Activated CD4-positive, alpha-beta memory T cell treated with anti-CD3 and anti-CD28 coated beads for 36 hours (primary cell): ENCODE measurements at regions of chr1 and their contacts with region 1.

Region 1: DNA sequence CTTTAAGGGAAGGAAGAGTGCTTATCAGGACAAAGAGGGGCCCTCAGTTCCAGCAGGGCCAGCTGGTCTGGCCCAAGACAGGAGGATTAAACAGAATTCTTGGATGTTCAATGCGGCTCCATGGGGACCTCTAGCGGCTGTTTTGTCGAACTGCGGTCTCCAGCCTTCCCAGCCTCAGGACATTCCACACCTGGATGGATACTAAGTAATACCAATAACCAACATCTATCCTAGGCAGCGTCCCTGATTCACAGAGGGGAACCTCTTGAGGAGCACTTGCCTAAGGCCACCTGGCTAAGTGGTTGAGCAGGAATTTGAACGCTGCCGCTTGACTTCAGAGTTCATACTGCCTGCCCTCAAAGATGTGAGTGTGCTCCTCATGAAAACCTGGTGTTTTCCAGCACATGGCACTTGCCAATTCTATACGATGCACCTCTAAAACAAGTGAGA is 15.5 kb upstream of the CD247 start:
- DNase-seq: peak; percentile 76
- H3K4me3 Mint-ChIP-seq: no peak overlapping the region
- H3K27ac Mint-ChIP-seq: no peak overlapping the region
- H3K4me1 Mint-ChIP-seq: peaks cover 4% of the 10 kb centered on the region
- H3K27me3 Mint-ChIP-seq: no peaks in the 10 kb centered on the region

Region 2: DNA sequence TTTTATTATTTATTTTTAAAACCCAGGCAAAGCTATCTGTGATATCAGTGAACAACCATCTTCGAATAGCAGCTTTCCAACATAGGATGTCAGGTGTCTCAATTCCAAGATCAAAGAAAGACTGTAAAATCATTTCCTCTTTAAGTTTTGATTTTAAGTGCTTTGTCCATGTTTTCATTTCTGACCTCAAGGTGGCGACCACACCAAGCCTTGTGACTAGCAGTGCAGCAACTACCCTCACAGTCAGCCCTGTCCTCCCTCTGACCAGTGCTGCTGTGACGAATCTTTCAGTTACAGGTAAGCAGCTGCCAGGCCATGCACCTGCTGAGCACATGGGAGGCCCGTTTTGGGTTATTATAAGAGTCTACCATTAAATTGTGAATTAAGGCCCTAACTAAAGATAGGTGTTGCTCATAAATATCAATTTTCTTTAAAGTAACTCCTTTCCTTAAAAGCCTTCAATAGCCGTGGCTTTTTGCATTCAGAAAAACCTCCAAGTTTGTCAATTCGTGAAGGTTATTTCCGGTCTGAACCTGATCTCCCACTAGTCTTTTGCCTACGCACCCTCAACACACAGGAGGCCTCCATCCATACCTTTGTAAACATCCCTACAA is 132.5 kb before region 1 on chr1:
- CTCF ChIA-PET with region 1: interaction called, 59 read pairs
- POLR2A ChIA-PET with region 1: interaction called, 4 read pairs
- intact Hi-C with region 1: loop called (anchors 1 kb)
- DNase-seq: peak; percentile 64
- H3K4me3 Mint-ChIP-seq: no peak overlapping the region
- H3K27ac Mint-ChIP-seq: no peak overlapping the region
- H3K4me1 Mint-ChIP-seq: no peaks in the 10 kb centered on the region
- H3K27me3 Mint-ChIP-seq: no peaks in the 10 kb centered on the region

Region 3: DNA sequence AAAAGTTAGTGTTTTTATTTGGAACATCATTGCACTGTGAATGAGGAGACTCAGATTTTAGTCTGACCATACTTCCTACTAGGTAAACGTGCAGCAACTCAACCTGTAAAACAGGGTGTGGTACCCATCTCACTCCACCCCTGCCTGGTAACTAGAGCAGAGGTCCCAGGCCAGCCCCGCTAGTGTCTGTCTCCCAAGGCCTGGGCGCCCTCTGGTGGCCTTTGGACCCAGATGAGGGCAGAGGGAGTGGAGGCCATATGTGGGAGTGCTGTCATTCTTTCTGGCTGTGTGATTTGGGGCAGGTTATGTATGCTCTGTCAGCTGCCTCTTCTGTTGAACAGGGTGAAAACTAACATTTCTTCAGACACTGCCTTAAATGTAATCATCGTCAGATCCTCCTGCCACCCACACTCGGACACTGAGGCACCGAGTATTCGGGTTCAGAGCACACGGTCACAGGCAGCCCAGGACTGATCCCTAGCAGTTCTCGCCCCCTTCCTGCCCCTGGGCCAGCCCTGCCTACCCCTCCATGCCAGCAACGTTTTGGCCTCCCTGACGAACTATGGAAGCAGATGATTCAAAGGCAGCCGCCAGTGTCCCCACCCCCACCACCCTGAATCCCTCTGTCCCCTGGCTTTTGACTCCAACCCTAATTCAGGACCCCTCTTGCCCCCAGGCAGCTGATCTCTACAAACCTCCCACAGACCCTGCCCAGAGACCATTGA is 91.6 kb before region 1 on chr1:
- CTCF ChIA-PET with region 1: interaction called, 62 read pairs
- POLR2A ChIA-PET with region 1: no interaction called
- intact Hi-C with region 1: loop called (anchors 1 kb)
- DNase-seq: peak; percentile 91
- H3K4me3 Mint-ChIP-seq: no peak overlapping the region
- H3K27ac Mint-ChIP-seq: peak overlapping the region; percentile 64
- H3K4me1 Mint-ChIP-seq: peaks cover 71% of the 10 kb centered on the region
- H3K27me3 Mint-ChIP-seq: no peaks in the 10 kb centered on the region

Region 4: GRCh38 chr1:167467126-167467710 is 66.7 kb before region 1 on chr1:
- CTCF ChIA-PET with region 1: interaction called, 19 read pairs
- POLR2A ChIA-PET with region 1: no interaction called
- intact Hi-C with region 1: no loop called
- DNase-seq: no peak
- H3K4me3 Mint-ChIP-seq: no peak overlapping the region
- H3K27ac Mint-ChIP-seq: peak overlapping the region; percentile 60
- H3K4me1 Mint-ChIP-seq: peaks cover 65% of the 10 kb centered on the region
- H3K27me3 Mint-ChIP-seq: no peaks in the 10 kb centered on the region

Region 5: DNA sequence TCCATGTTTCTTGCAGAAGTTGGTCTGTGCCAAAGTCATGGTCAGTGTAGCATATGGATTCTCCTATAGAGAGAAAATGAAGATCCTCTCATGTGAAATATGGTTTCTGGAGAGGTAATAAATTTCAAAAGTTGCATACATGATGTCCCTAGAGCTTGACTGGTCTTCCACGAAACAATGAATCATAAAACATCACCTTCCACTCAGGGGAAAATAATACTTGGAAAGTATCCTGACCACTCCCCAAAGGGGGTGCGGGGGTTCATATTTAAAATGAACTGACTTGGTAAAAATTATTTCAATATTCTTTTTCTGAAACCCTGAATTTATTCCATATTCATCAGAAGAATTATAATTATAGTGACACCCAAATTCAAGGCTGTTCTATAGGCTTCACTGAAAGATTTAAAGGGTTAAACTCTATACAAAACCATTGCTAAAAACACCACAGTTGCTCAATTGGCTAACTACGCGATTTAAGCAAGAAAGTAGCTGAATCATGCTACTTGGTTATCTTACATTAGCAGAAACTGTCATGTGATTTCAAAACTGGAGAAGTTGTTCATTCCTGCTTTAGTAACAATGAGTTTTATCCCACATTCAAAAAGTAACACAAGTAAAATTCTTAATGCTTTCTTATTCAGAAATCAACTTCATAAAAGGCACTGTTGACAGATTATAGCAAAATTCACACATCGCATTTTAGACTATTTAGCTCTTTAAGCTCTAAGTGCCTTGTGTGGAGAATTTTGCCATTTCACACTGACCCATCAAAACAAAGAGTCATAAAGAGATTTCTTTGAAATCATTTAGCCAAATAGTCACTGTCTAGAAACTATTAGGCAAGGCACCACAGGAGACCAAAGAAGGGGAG is 14.4 kb after region 1 on chr1:
- CTCF ChIA-PET with region 1: interaction called, 47 read pairs
- POLR2A ChIA-PET with region 1: no interaction called
- intact Hi-C with region 1: no loop called
- DNase-seq: no peak
- H3K4me3 Mint-ChIP-seq: no peak overlapping the region
- H3K27ac Mint-ChIP-seq: no peak overlapping the region
- H3K4me1 Mint-ChIP-seq: peaks cover 36% of the 10 kb centered on the region
- H3K27me3 Mint-ChIP-seq: no peaks in the 10 kb centered on the region

Region 6: GRCh38 chr1:167578939-167579521 is 45.2 kb after region 1 on chr1:
- CTCF ChIA-PET with region 1: no interaction called
- POLR2A ChIA-PET with region 1: no interaction called
- intact Hi-C with region 1: no loop called
- DNase-seq: no peak
- H3K4me3 Mint-ChIP-seq: no peak overlapping the region
- H3K27ac Mint-ChIP-seq: no peak overlapping the region
- H3K4me1 Mint-ChIP-seq: no peaks in the 10 kb centered on the region
- H3K27me3 Mint-ChIP-seq: peaks cover 2% of the 10 kb centered on the region

Region 7: DNA sequence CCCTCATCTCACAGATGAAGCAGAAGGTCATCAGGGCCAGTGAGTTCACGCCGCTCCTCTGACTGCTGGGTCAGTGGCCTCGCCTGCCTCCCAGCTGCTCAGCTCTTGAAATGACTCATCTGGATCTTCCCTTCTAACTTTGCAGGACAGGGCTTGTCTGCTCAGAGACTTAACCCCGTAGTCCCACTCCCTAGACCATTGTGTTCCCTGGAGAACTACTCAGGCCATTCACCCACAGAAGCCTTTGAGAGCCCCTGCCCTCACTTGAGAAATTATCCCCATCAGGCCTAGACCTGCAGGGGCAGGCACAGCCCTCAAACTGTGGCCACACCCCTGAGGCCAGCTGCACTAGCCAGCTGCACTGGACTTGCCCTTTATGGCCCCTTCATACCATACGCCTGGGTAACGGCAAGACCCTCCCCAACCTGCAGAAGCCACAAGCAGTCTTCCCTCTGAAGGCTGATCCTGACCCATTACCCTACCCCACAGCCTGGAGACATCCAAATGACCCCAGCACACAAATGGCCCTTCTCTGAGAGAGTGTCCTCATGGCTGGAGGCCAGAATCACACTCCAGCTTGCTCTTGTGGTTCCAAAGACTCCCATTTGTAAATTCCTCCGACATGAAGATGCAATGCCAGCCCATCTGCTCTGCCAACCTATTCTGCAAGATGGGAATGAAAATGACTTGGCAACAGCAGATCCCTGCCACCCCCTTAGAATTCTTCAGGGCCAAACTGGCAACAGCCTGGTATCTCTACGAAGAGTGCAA is 129.3 kb after region 1 on chr1:
- CTCF ChIA-PET with region 1: no interaction called
- POLR2A ChIA-PET with region 1: no interaction called
- intact Hi-C with region 1: no loop called
- DNase-seq: no peak
- H3K4me3 Mint-ChIP-seq: no peak overlapping the region
- H3K27ac Mint-ChIP-seq: peak overlapping the region; percentile 42
- H3K4me1 Mint-ChIP-seq: peaks cover 77% of the 10 kb centered on the region
- H3K27me3 Mint-ChIP-seq: no peaks in the 10 kb centered on the region